H1 (cell line): ENCODE measurements at regions of chr7 and their contacts with region 1.

Region 1: GRCh38 chr7:138886501-138886917 is 88.5 kb upstream of the ATP6V0A4 start:
- DNase-seq: no peak
- H3K4me3 ChIP-seq: no peak overlapping the region
- H3K27ac ChIP-seq: no peak overlapping the region
- H3K4me1 ChIP-seq: no peaks in the 10 kb centered on the region; a peak in 2 of 7 replicates
- H3K27me3 ChIP-seq: no peaks in the 10 kb centered on the region
- CTCF ChIP-seq: peak in 2 of 3 experiments; percentile 17 to 53; a peak in 2 of 4 replicates
- EP300 ChIP-seq: no peak
- POLR2A ChIP-seq: no peak
- RAD21 ChIP-seq: peak; percentile 35 to 39; a peak in 3 of 4 replicates

Region 2: DNA sequence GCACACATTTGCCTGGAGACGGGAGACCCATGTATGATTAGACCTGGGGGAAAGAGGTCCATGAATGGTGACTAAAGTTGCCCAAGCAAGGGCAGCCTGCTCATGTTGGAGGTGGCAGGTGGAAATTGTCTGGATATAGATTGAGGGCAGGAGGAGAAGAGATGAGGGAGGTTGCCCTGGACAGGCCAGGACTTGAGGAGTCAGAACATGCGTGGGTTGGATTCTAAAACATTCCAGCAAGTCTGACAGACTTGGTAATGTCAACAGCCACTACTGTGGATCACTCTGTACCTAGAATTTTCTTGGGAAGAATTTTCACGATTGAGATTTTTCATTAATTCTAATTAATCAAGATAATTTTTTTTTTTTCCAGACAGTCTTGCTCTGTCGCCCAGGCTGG is 166.2 kb before region 1 on chr7:
- CTCF ChIA-PET with region 1: no interaction called
- POLR2A ChIA-PET with region 1: no interaction called
- DNase-seq: no peak
- H3K4me3 ChIP-seq: no peak overlapping the region
- H3K27ac ChIP-seq: no peak overlapping the region
- H3K4me1 ChIP-seq: peaks cover 0 to 5% (median under 1%) of the 10 kb centered on the region in 4 experiments; a peak in 3 of 7 replicates
- H3K27me3 ChIP-seq: no peaks in the 10 kb centered on the region
- CTCF ChIP-seq: no peak
- EP300 ChIP-seq: no peak
- POLR2A ChIP-seq: no peak
- RAD21 ChIP-seq: no peak

Region 3: DNA sequence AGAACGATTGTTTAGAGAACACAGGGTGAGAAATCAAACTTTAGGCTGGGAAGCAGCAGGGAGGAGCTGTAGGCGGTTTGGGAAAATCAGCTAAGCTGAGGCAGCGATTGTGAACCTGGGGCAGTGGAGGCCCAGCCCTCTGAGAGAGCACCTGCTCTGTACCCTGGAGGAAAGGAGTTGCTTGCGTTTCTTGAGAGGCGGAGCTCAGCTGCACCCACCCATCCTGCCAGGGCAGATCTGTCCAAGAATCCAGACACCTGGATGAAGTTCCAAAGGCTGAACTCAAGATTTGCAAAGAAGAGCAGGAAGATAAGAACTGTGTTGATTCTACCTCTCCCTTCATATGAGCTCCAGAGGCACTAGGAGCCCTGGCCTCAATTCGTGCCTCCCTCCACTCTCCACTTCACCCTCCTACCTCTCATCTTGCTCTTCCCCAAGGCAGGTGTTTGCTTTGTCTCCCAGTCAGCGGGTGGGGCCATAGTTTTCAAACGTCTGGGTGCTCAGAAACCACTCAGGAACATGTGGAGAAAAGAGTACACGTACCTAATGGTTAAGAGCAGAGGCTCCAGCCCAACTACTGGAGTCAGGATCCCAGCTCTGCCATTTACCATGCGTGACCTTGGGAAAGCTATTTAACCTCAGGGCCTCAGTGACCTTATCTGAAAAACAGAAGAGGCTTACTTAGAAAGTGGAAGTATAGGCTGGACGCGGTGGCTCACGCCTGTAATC is 110.2 kb before region 1 on chr7:
- CTCF ChIA-PET with region 1: no interaction called
- POLR2A ChIA-PET with region 1: no interaction called
- DNase-seq: no peak
- H3K4me3 ChIP-seq: no peak overlapping the region
- H3K27ac ChIP-seq: no peak overlapping the region
- H3K4me1 ChIP-seq: peaks cover 0 to 5% (median 4%) of the 10 kb centered on the region in 4 experiments; a peak in 5 of 7 replicates
- H3K27me3 ChIP-seq: peaks cover 0 to 10% (median 3%) of the 10 kb centered on the region in 4 experiments; a peak in 4 of 7 replicates
- CTCF ChIP-seq: no peak
- EP300 ChIP-seq: no peak
- POLR2A ChIP-seq: no peak
- RAD21 ChIP-seq: no peak

Region 4: DNA sequence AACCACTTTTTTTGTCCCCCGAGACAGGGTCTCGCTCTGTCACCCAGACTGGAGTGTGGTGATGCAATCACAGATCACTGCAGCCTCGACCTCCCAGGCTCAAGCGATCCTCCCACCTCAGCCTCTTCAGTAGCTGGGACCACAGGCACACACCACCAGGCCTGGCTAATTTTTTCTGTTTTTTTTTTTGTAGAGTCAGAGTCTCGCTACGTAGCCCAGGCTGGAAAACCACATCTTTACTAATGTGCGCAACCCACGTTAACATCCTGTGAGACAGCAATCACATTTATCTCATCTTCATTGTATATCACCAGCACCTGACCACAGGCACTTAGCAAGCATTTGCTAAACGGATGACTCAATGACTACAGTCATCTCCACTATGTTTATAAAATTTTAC is 10.7 kb before region 1 on chr7:
- CTCF ChIA-PET with region 1: interaction called, 21 read pairs
- POLR2A ChIA-PET with region 1: no interaction called
- DNase-seq: no peak
- H3K4me3 ChIP-seq: no peak overlapping the region
- H3K27ac ChIP-seq: no peak overlapping the region
- H3K4me1 ChIP-seq: no peaks in the 10 kb centered on the region
- H3K27me3 ChIP-seq: no peaks in the 10 kb centered on the region
- CTCF ChIP-seq: no peak
- EP300 ChIP-seq: no peak
- POLR2A ChIP-seq: no peak
- RAD21 ChIP-seq: no peak

Region 5: DNA sequence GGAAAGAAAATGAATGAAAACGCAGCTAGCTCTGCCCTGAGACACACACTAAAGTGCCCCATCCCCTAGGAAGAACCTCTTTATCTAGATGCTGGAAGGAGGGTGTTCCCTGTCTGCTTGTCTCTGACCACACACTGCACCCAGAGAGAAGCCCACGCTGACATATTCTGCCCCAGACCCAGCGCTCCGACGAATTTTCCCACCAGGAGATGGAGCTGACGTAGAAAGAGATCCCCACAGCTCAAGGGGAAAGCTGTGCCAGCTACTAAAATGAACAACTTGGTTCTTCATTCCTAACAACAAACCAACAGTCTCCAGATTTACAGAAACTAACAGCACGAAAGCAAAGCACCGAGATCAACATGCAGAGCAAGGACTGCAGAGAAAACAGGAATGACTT is 21.3 kb after region 1 on chr7:
- CTCF ChIA-PET with region 1: interaction called, 14 read pairs
- POLR2A ChIA-PET with region 1: no interaction called
- DNase-seq: no peak
- H3K4me3 ChIP-seq: no peak overlapping the region
- H3K27ac ChIP-seq: no peak overlapping the region
- H3K4me1 ChIP-seq: no peaks in the 10 kb centered on the region
- H3K27me3 ChIP-seq: no peaks in the 10 kb centered on the region
- CTCF ChIP-seq: peak in 2 of 3 experiments; percentile 15 to 17; a peak in 2 of 4 replicates
- EP300 ChIP-seq: no peak
- POLR2A ChIP-seq: no peak
- RAD21 ChIP-seq: peak; percentile 36 to 51; a peak in 3 of 4 replicates